OCI-LY7 (cell line): ENCODE measurements at regions of chr2 and their contacts with region 1.

Region 1: GRCh38 chr2:60881047-60881932 is at the start of gene REL:
- DNase-seq: peak; percentile 93
- H3K4me3 ChIP-seq: peak within 1 kb of the TSS; percentile 88
- H3K27ac ChIP-seq: peak within 1 kb of the TSS; percentile 84
- H3K4me1 ChIP-seq: peaks cover 24% of the 10 kb centered on the region
- CTCF ChIP-seq: 0 out of 2 replicates have a peak, but pooled peaks have one; percentile 50
- total RNA-seq, gene REL: 49.9 and 50.2 TPM in 2 replicates

Region 2: GRCh38 chr2:60679036-60679780 is 202.1 kb before region 1 on chr2:
- CTCF ChIA-PET with region 1: no interaction called
- POLR2A ChIA-PET with region 1: no interaction called
- intact Hi-C with region 1: no loop called
- DNase-seq: no peak
- H3K4me3 ChIP-seq: no peak overlapping the region
- H3K27ac ChIP-seq: no peak overlapping the region
- H3K4me1 ChIP-seq: no peaks in the 10 kb centered on the region
- CTCF ChIP-seq: no peak

Region 3: DNA sequence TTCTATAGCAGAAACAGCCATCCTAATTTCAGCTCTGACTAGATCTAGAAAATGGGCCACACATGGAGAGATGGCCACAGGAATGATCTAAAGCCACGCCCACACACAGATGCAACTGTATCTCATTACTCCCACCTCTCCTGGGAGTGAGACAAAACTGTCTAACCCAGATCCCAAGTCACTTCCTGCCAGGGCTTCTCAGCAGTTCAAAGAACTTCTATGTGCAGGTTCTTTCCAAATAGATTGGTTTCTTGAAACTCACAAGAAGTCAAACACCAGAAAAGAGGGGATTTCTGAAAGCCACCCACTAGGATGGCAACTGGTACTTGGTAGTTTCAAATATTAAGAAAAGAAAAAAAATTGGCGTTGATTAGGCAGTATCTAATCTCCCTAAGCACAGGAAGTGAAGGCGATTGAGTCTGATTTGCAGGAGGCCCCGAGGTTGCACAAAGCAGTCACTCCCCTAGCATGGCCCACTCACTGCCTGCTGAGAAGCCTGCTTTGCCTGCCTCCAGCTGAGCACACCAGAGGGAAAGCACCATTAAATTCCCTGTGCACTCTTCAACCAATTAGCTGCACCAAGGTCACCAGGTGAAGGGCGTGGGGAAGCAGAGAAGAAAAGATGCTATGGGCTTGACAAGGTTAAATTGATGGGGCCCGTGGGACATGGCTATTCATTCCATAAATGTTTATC is 74.2 kb before region 1 on chr2:
- CTCF ChIA-PET with region 1: interaction called, 3 read pairs
- POLR2A ChIA-PET with region 1: interaction called, 6 read pairs
- intact Hi-C with region 1: loop called (anchors 2 kb)
- DNase-seq: peak; percentile 65
- H3K4me3 ChIP-seq: peak overlapping the region; percentile 3
- H3K27ac ChIP-seq: peak overlapping the region; percentile 56
- H3K4me1 ChIP-seq: peaks cover 53% of the 10 kb centered on the region
- CTCF ChIP-seq: no peak

Region 4: GRCh38 chr2:60840880-60841279 is 40.4 kb before region 1 on chr2:
- CTCF ChIA-PET with region 1: interaction called, 11 read pairs
- POLR2A ChIA-PET with region 1: interaction called, 89 read pairs
- intact Hi-C with region 1: loop called (anchors 1 kb)
- DNase-seq: peak; percentile 99
- H3K4me3 ChIP-seq: peak overlapping the region; percentile 64
- H3K27ac ChIP-seq: peak overlapping the region; percentile 96
- H3K4me1 ChIP-seq: peaks cover 97% of the 10 kb centered on the region
- CTCF ChIP-seq: no peak

Region 5: GRCh38 chr2:60966507-60967405 is 85.5 kb after region 1 on chr2:
- CTCF ChIA-PET with region 1: no interaction called
- POLR2A ChIA-PET with region 1: interaction called, 20 read pairs
- intact Hi-C with region 1: no loop called
- DNase-seq: peak; percentile 24
- H3K4me3 ChIP-seq: peak overlapping the region; percentile 43
- H3K27ac ChIP-seq: peak overlapping the region; percentile 69
- H3K4me1 ChIP-seq: peaks cover 71% of the 10 kb centered on the region
- CTCF ChIP-seq: no peak

Region 6: GRCh38 chr2:61016808-61017555 is 135.7 kb after region 1 on chr2:
- CTCF ChIA-PET with region 1: no interaction called
- POLR2A ChIA-PET with region 1: no interaction called
- intact Hi-C with region 1: loop called (anchors 1 kb)
- DNase-seq: peak; percentile 85
- H3K4me3 ChIP-seq: peak overlapping the region; percentile 89
- H3K27ac ChIP-seq: peak overlapping the region; percentile 87
- H3K4me1 ChIP-seq: peaks cover 22% of the 10 kb centered on the region
- CTCF ChIP-seq: no peak

Region 7: DNA sequence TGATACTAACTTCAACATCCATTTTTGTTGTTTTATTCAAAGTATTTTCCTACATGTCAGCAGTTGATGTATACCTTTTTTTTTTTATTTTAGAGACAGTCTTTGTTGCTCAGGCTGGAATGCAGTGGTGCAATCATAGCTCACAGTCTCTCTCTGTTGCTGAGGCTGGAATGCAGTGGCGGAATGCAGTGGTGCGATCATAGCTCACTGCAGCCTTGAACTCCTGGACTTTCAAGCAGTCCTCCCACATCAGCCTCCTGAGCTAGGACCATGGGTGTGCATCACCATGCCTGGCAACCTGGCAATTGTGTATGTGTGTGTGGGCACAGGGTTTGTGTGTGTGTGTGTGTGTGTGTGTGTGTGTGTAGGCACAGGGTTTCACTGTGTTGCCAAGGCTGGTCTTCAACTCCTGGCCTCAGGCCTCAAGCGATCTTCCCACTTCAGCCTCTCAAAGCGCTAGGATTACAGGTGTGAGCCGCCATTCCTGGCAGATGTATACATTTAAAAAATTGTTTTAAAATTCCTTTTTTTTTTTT is 209.2 kb after region 1 on chr2:
- CTCF ChIA-PET with region 1: no interaction called
- POLR2A ChIA-PET with region 1: no interaction called
- intact Hi-C with region 1: no loop called
- DNase-seq: no peak
- H3K4me3 ChIP-seq: no peak overlapping the region
- H3K27ac ChIP-seq: no peak overlapping the region
- H3K4me1 ChIP-seq: no peaks in the 10 kb centered on the region
- CTCF ChIP-seq: no peak